Tibial artery (tissue), 4 donors: ENCODE measurements at regions of chrX and their contacts with region 1.

Region 1: DNA sequence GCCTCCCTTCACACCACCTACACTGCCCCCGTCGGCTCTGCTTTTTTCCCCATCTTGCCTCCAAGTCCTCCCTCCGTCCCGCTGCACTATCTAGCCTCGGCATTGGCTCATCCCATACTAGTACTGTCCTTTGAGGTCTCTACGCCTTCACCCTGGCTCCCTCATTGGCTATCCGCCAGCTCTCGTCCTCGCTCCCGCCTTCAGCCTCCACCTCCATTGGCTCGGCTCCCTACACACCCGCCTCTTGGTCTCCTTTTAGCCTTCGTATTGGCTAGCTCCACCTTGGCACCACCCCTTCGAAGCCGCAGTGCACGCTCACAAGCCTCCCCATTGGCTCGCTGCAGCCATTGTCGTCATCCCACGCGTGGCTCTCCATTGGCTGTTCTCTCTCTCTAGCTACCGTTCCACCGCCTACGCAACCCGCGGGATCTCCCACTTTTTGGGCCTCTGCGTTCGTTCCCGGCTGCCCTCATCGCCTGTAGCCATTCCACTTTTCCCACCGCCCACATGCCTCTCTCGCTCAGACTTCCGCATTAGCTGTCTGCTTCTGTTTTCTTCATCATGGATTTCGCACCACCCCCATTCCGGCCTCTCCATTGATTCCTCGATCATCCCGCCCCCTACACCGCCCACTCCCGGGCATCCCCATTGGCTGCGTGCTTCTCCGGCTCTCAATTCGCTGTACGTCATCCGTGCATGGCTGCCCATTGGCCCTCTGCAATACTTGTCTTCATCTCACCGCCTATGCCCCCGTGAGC is 404 bp upstream of the PPP1R3F start:
- DNase-seq: peak; percentile 97 to 98
- H3K4me3 ChIP-seq: peak overlapping the region; percentile 80 to 89
- H3K27ac ChIP-seq: peak overlapping the region; percentile 91 to 93
- H3K4me1 ChIP-seq: peaks cover 0 to 40% (median 19%) of the 10 kb centered on the region in 4 donors
- H3K27me3 ChIP-seq: no peaks in the 10 kb centered on the region
- CTCF ChIP-seq: no peak

Region 2: GRCh38 chrX:49191033-49191871 is 77.9 kb before region 1 on chrX:
- intact Hi-C with region 1: loop called (anchors 2 kb)
- DNase-seq: peak; percentile 95 to 96
- H3K4me3 ChIP-seq: peak overlapping the region; percentile 62 to 71
- H3K27ac ChIP-seq: peak overlapping the region; percentile 86 to 94
- H3K4me1 ChIP-seq: peaks cover 0 to 5% (median 0%) of the 10 kb centered on the region in 4 donors
- H3K27me3 ChIP-seq: no peaks in the 10 kb centered on the region
- CTCF ChIP-seq: peak in 1 of 2 experiments; percentile 25